ENCODE measurements at regions of chr9 and their contacts with region 1.

Region 1: GRCh38 chr9:35732122-35732799 is at the starts of genes CREB3 and TLN1:
- DNase-seq: peak; percentile 84 to 97
- ATAC-seq: peak; percentile 84 to 94 (median 86)
- H3K4me3 ChIP-seq: peak within 1 kb of the TSS; percentile 88
- H3K4me3 Mint-ChIP-seq: no peak within 1 kb of the TSS
- H3K27ac ChIP-seq: peak within 1 kb of the TSS; percentile 95
- H3K27ac Mint-ChIP-seq: no peak within 1 kb of the TSS
- H3K4me1 ChIP-seq: peaks cover 50% of the 10 kb centered on the region
- H3K4me1 Mint-ChIP-seq: peaks cover 16 to 25% of the 10 kb centered on the region in 2 donors
- H3K27me3 ChIP-seq: no peaks in the 10 kb centered on the region
- H3K27me3 Mint-ChIP-seq: no peaks in the 10 kb centered on the region
- CTCF ChIP-seq: no peak
- total RNA-seq, gene CREB3: 15.7 to 19.7 (median 18.8) TPM
- total RNA-seq, gene TLN1: 509 to 552 (median 528) TPM

Region 2: DNA sequence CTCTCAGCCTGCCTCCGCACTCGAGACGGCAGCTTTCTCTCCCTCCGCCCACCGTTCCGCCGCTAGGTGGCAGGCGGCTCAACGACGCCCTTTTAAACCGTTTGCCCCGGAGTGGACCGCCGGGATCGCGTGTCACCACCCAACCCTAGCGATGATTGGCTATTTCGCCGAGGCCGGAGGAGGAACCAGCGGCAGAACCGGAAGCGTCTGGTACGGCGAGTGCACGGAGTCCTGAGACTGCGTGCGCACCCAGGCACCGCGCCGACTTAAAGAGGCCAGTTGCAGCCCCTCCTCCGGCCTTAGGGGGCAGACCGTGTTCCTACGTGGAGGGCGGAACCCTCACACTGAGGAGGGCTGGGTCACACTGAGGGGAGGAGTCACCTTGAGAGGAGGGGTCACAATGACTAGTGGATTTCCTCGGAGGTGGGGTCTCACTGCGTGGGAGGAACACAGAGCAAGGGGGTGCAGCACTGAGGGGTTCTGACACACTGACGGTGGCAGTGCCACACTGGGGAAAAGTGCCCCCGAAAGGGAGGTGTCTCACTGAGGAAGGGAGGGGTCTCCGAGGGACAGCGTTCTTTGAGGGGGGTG is 128.2 kb before region 1 on chr9:
- intact Hi-C with region 1: loop called (anchors 1 kb)
- DNase-seq: peak; percentile 98 to 100
- ATAC-seq: peak; percentile 88 to 97 (median 90)
- H3K4me3 ChIP-seq: peak overlapping the region; percentile 51
- H3K4me3 Mint-ChIP-seq: peak overlapping the region; percentile 98
- H3K27ac ChIP-seq: peak overlapping the region; percentile 80
- H3K27ac Mint-ChIP-seq: peak overlapping the region; percentile 96 to 98
- H3K4me1 ChIP-seq: peaks cover 37% of the 10 kb centered on the region
- H3K4me1 Mint-ChIP-seq: peaks cover 22 to 37% of the 10 kb centered on the region in 2 donors
- H3K27me3 ChIP-seq: no peaks in the 10 kb centered on the region
- H3K27me3 Mint-ChIP-seq: no peaks in the 10 kb centered on the region
- CTCF ChIP-seq: peak; percentile 98

Region 3: DNA sequence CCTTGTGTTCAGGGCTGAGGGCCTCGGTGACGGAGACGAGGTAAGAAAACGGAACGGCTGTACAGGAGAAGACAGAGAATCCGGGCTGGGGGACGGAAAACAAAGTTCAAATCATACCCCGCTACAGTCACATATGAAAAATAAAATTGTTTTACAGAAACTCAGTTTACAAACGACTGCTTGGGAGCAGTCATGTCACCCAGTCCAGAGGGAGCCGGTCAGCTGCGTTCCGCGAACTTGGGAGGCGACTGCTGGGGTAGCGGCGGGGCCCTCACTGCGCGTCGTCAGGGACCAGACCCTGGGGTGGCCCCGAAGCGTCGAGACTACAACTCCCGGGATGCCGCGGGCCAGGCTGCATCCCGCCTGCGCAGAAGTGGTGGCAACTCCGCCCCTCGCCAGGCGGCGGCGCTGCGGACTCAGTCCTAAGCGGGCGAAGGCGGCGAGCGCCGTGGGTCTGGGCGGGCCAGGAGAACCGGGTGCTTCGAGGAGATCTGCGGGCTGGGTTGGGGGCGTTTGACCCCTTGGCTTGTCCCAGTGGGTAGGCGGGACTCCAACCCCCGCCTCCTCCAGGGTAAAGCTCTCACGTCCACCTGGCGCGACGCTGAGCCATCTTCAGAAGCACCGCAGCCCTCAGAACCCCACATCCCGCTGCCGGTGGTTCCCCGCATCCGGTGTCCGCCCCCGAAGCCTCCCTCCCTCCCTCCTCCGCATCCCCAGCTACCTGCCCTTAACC is 85.6 kb before region 1 on chr9:
- intact Hi-C with region 1: loop called (anchors 2 kb)
- DNase-seq: peak; percentile 94 to 95
- ATAC-seq: peak; percentile 97 to 99 (median 97)
- H3K4me3 ChIP-seq: peak overlapping the region; percentile 55
- H3K4me3 Mint-ChIP-seq: peak overlapping the region; percentile 99
- H3K27ac ChIP-seq: peak overlapping the region; percentile 82
- H3K27ac Mint-ChIP-seq: peak overlapping the region; percentile 98
- H3K4me1 ChIP-seq: peaks cover 79% of the 10 kb centered on the region
- H3K4me1 Mint-ChIP-seq: peaks cover 42 to 58% of the 10 kb centered on the region in 2 donors
- H3K27me3 ChIP-seq: no peaks in the 10 kb centered on the region
- H3K27me3 Mint-ChIP-seq: no peaks in the 10 kb centered on the region
- CTCF ChIP-seq: peak; percentile 94

Region 4: DNA sequence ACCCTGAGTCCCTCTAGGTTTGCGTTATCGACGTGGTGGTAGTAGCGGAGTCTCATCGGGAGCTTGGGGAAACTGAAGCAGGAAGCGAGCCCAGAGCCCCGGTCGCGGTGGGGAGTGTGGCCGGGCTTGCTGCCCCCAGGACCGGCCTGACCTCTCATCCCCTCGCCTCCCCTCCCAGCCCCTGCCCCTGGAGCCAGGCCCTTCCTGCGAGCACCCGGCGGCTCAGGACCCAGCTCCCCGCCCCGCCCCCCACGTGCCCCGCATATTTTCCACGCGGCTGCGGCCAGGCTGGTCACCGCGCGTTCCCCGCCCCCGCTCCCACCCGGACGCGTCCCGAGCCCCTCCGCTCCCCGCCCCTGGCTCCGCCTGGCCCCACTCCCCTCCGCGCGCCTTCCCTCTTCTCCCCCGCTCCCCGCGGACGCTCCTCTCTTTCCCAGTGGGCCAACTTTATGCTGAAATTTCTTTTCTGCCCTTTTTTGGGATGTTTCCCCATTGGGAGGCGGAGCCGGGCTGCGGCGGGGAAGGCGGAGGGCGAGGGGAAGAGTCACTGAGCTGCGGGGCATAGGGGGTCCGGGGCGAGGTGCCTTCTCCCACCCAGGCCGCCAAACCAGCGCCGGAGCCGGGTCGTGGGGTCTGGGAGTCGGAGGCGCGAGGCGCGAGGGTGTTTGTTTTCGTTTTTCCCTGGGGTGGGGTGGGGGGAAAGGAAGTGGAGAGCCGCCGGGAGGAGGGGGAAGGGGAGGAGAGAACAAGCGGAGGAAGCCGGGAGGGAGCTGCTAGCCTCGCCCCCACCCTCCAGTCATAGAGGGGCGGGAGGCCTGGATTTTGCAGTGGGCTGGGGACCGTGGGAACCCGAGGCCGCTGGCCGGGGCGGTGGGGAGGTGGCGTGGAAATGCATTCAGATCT is 41.6 kb before region 1 on chr9:
- intact Hi-C with region 1: no loop called
- DNase-seq: peak; percentile 19 to 56
- ATAC-seq: peak; percentile 61 to 68 (median 65)
- H3K4me3 ChIP-seq: peak overlapping the region; percentile 78
- H3K4me3 Mint-ChIP-seq: peak overlapping the region; percentile 90
- H3K27ac ChIP-seq: peak overlapping the region; percentile 47
- H3K27ac Mint-ChIP-seq: peak overlapping the region; percentile 78 to 84
- H3K4me1 ChIP-seq: peaks cover 17% of the 10 kb centered on the region
- H3K4me1 Mint-ChIP-seq: peaks cover 0 to 25% of the 10 kb centered on the region in 2 donors
- H3K27me3 ChIP-seq: no peaks in the 10 kb centered on the region
- H3K27me3 Mint-ChIP-seq: no peaks in the 10 kb centered on the region
- CTCF ChIP-seq: no peak

Region 5: DNA sequence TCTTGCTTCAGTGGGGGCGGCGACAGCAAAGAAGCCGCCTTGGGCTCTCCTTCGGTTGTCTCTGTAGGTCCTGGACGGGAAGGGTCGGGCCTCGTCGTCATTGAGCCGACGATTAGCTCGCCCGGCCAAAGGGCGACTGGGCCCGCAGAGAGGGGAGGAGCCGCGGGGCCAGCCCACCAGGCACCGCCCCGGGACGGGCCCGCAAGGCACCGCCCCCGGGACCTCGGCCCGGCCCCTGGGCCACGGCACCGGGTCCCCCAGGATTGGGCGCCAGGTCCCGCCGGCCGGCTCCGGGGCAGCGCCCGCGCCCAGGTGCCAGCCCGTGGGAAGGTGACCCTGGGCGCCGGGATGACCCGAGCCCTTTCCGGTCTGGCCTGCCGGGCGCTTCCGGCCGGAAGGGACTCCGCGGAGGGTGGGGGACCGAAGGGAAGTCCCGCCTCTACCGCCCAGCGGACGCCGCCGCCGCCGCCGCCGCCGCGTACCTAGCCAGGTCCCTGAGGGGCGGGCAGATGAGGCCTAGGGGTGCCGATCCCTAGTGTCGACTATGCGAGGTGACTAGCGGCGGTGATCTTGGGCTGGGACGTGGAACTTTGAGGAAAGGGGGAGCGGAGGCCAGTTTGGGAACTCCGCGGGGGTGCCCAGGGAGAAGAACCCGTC is 16.7 kb after region 1 on chr9 and contains the starts of genes GBA2 and RGP1:
- intact Hi-C with region 1: loop called (anchors 1 kb)
- DNase-seq: peak; percentile 67 to 70
- ATAC-seq: peak; percentile 82 to 88 (median 85)
- H3K4me3 ChIP-seq: peak within 1 kb of the TSS; percentile 87
- H3K4me3 Mint-ChIP-seq: peak within 1 kb of the TSS; percentile 92
- H3K27ac ChIP-seq: peak within 1 kb of the TSS; percentile 79
- H3K27ac Mint-ChIP-seq: peak within 1 kb of the TSS; percentile 90 to 92
- H3K4me1 ChIP-seq: peaks cover 34% of the 10 kb centered on the region
- H3K4me1 Mint-ChIP-seq: peaks cover 40 to 50% of the 10 kb centered on the region in 2 donors
- H3K27me3 ChIP-seq: no peaks in the 10 kb centered on the region
- H3K27me3 Mint-ChIP-seq: no peaks in the 10 kb centered on the region
- CTCF ChIP-seq: no peak
- total RNA-seq, gene GBA2: 76.4 to 118 (median 101) TPM
- total RNA-seq, gene RGP1: 22.3 to 26.4 (median 23.3) TPM

Region 6: GRCh38 chr9:35814841-35815543 is 82.7 kb after region 1 on chr9 and contains the start of gene HINT2:
- intact Hi-C with region 1: loop called (anchors 2 kb)
- DNase-seq: peak; percentile 96 to 98
- ATAC-seq: peak; percentile 78 to 91 (median 79)
- H3K4me3 ChIP-seq: peak within 1 kb of the TSS; percentile 73
- H3K4me3 Mint-ChIP-seq: peak within 1 kb of the TSS; percentile 98
- H3K27ac ChIP-seq: peak within 1 kb of the TSS; percentile 87
- H3K27ac Mint-ChIP-seq: peak within 1 kb of the TSS; percentile 96 to 98
- H3K4me1 ChIP-seq: peaks cover 38% of the 10 kb centered on the region
- H3K4me1 Mint-ChIP-seq: peaks cover 43 to 53% of the 10 kb centered on the region in 2 donors
- H3K27me3 ChIP-seq: no peaks in the 10 kb centered on the region
- H3K27me3 Mint-ChIP-seq: no peaks in the 10 kb centered on the region
- CTCF ChIP-seq: no peak
- total RNA-seq, gene HINT2: 25.8 to 27.5 (median 25.9) TPM

Region 7: DNA sequence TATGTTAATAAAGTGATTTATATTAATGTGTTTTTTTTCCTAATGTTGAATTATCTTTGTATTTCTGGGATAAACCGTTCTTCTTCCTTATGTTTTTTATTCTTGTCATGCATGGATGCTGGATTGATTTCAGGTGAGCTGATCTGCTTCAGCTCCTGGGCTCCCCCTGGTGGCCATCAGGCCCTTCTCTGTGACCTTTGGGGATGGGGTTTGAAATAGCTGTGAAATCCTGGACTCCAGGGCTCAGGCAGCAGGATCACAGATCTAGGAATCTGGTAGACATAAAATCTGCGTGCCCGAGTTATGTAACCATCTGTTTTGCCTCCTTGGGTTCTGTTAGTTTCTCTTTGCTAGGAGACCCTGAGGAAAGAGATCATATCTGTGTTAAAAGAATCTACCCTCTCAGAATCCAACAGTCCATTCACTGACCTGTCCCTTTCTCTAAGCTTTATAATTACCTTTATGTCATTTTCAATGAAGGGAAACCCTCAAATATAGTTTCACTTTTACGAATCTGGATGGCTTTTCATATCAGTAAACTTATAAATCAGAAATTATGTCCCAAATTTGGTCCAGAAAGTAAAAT is 150.1 kb after region 1 on chr9:
- intact Hi-C with region 1: loop called (anchors 1 kb)
- DNase-seq: peak; percentile 78 to 89
- ATAC-seq: peak; percentile 64 to 75 (median 67)
- H3K4me3 ChIP-seq: no peak overlapping the region
- H3K4me3 Mint-ChIP-seq: no peak overlapping the region
- H3K27ac ChIP-seq: no peak overlapping the region
- H3K27ac Mint-ChIP-seq: no peak overlapping the region
- H3K4me1 ChIP-seq: no peaks in the 10 kb centered on the region
- H3K4me1 Mint-ChIP-seq: no peaks in the 10 kb centered on the region
- H3K27me3 ChIP-seq: peaks cover 2% of the 10 kb centered on the region
- H3K27me3 Mint-ChIP-seq: peaks cover 18 to 21% of the 10 kb centered on the region in 2 donors
- CTCF ChIP-seq: peak; percentile 99

Measured in natural killer cell (primary cell).